CD8-positive, alpha-beta memory T cell (primary cell): ENCODE measurements at regions of chr2 and their contacts with region 1.

Region 1: DNA sequence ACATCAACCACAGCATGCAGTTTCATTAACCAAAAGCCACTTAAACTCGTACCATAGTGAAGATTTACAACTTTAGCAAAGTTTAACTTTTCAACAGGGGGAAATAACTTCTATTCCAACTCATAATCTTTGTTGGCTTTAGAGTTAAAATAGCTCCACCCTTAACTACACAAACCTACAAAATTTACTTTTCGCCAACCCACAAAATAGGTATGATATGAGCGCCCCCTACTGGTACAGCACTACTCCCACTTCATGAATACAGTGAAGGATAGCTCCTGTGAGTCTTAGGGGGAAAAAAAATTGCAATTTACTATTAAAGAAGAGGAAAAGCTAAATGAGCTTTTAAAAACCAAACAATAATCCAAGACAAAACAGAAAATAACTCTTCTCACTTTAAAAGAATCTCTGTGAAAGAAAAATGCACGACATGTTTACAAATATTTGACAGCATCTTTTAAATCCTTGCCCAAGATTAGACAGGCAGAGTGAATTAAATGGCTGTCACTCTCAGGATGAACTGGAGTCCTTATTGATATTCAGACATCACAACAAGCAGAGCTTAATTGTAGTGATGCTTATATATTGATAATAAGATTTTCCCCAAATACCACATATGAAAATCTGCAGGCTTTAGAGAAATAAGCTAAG is 32.2 kb downstream of the TMEFF2 start:
- DNase-seq: peak; percentile 45 to 63 (median 49)
- H3K4me3 ChIP-seq: peak overlapping the region; percentile 16
- H3K4me3 Mint-ChIP-seq: no peak overlapping the region
- H3K27ac ChIP-seq: no peak overlapping the region
- H3K27ac Mint-ChIP-seq: no peak overlapping the region
- H3K4me1 ChIP-seq: peaks cover 10% of the 10 kb centered on the region
- H3K4me1 Mint-ChIP-seq: peaks cover 7 to 8% (median 8%) of the 10 kb centered on the region in 3 donors
- H3K27me3 ChIP-seq: no peaks in the 10 kb centered on the region
- H3K27me3 Mint-ChIP-seq: peaks cover 3 to 32% of the 10 kb centered on the region in 2 donors

Region 2: GRCh38 chr2:191539068-191539467 is 623.4 kb before region 1 on chr2:
- CTCF ChIA-PET with region 1: interaction called, 13 read pairs
- POLR2A ChIA-PET with region 1: no interaction called
- DNase-seq: no peak
- H3K4me3 ChIP-seq: no peak overlapping the region
- H3K4me3 Mint-ChIP-seq: no peak overlapping the region
- H3K27ac ChIP-seq: no peak overlapping the region
- H3K27ac Mint-ChIP-seq: no peak overlapping the region
- H3K4me1 ChIP-seq: no peaks in the 10 kb centered on the region
- H3K4me1 Mint-ChIP-seq: no peaks in the 10 kb centered on the region
- H3K27me3 ChIP-seq: no peaks in the 10 kb centered on the region
- H3K27me3 Mint-ChIP-seq: peaks cover 6 to 16% of the 10 kb centered on the region in 2 donors

Region 3: DNA sequence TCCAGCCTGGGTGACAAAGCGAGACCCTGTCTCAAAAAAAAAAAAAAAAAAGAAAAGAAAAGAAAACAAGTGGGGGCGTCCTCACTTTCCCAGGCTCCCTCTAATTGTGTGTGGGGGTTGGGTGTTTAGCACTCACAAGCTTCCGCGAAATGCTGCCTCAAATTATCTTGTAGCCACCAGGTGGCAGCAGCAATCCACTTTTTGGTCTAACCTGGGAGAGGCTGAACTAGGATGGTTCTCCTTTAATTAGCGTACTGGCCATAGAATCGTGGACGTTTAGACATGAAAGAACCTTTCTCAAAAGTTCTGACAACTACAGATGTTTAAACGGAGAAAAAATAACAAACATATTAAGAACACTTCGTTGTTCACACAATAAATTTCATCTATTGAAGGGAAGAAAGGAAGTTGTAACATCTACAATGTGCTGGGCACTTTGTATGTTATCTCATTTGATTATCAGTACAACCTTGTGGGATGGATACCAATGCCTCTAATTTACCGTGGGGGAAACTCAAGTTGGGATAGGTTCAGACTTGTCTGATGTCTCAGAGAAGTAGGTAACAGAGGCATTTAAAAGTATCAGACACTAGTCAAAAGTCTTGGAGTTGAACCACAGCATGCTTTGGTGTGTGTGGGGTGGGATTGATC is 607.3 kb before region 1 on chr2:
- CTCF ChIA-PET with region 1: interaction called, 77 read pairs
- POLR2A ChIA-PET with region 1: no interaction called
- DNase-seq: peak; percentile 62 to 84 (median 68)
- H3K4me3 ChIP-seq: no peak overlapping the region
- H3K4me3 Mint-ChIP-seq: no peak overlapping the region
- H3K27ac ChIP-seq: no peak overlapping the region
- H3K27ac Mint-ChIP-seq: no peak overlapping the region
- H3K4me1 ChIP-seq: peaks cover 3% of the 10 kb centered on the region
- H3K4me1 Mint-ChIP-seq: peaks cover 3 to 4% (median 3%) of the 10 kb centered on the region in 3 donors
- H3K27me3 ChIP-seq: no peaks in the 10 kb centered on the region
- H3K27me3 Mint-ChIP-seq: peaks cover 7 to 37% of the 10 kb centered on the region in 2 donors

Region 4: DNA sequence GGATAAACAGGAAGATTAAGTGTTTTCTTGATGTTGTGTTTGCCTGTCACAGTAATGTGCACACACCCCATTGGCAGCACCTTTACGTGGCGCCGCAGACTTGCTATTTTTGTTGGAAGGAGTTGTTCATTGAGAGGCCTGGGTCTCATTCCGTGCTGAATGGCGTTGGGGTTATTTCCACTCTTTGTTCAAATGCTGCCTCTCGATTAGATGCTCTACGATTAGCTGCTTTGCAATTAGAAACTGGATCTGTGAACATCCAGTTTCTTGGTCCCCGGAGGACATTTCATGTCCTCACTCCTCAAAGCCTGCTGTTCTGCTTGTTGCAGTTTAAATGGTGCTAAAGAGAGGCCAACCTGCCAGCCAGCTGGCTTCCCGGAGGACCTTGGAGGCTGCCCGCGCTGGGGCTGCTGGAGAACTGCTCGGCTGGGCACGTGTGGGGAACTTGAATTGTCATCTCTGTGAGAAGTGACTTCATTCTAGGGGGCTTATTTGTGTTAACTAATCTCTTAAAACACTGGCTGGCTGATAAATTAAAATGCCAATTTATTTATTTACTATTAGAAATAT is 602.0 kb before region 1 on chr2:
- CTCF ChIA-PET with region 1: interaction called, 77 read pairs
- POLR2A ChIA-PET with region 1: no interaction called
- DNase-seq: no peak
- H3K4me3 ChIP-seq: no peak overlapping the region
- H3K4me3 Mint-ChIP-seq: no peak overlapping the region
- H3K27ac ChIP-seq: no peak overlapping the region
- H3K27ac Mint-ChIP-seq: peak overlapping the region in 1 of 8 donors; percentile 31
- H3K4me1 ChIP-seq: no peaks in the 10 kb centered on the region
- H3K4me1 Mint-ChIP-seq: peaks cover 0 to 3% (median 3%) of the 10 kb centered on the region in 3 donors
- H3K27me3 ChIP-seq: no peaks in the 10 kb centered on the region
- H3K27me3 Mint-ChIP-seq: peaks cover 13 to 36% of the 10 kb centered on the region in 2 donors

Region 5: GRCh38 chr2:191566344-191566743 is 596.2 kb before region 1 on chr2:
- CTCF ChIA-PET with region 1: interaction called, 15 read pairs
- POLR2A ChIA-PET with region 1: no interaction called
- DNase-seq: peak; percentile 49 to 69 (median 56)
- H3K4me3 ChIP-seq: no peak overlapping the region
- H3K4me3 Mint-ChIP-seq: no peak overlapping the region
- H3K27ac ChIP-seq: no peak overlapping the region
- H3K27ac Mint-ChIP-seq: no peak overlapping the region
- H3K4me1 ChIP-seq: peaks cover 16% of the 10 kb centered on the region
- H3K4me1 Mint-ChIP-seq: peaks cover 26 to 28% (median 27%) of the 10 kb centered on the region in 3 donors
- H3K27me3 ChIP-seq: peaks cover 4% of the 10 kb centered on the region
- H3K27me3 Mint-ChIP-seq: peaks cover 21 to 65% of the 10 kb centered on the region in 2 donors

Region 6: DNA sequence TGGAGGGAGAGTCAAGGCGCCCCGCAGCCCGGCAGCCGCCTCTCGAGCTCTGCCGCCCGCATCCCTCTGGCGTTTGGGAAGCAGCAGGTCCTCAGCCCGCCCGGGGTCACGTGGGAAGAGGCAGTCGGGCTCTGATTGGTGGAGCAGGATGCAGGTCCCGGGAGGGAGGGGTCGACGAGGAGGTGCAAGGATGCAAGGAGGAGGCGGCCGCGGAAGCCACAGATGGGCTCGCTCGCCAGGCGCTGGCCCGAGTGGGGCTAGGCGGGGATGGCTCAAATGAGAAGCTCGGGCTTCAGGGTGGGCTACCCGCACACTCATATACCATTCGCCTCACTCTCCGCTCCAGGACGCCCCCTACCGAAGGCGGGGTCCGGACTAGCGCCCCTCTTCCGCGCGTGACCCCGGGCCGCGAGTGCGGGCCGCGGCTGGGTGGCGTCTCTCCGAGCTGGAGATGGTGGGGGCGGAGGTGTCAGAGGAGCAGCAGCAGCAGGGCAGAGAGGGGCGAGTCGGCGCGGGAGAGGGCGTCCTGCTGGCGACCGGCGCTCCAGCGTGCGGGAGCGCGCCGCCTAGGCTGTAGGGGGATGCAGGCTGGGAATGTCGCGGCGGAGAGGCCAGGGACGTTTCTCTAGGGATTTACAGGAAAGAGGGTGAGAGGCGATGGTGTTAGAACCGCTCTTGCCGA is 32.5 kb after region 1 on chr2 and contains the start of gene TMEFF2:
- CTCF ChIA-PET with region 1: interaction called, 11 read pairs
- POLR2A ChIA-PET with region 1: no interaction called
- DNase-seq: peak in 3 of 5 donors; percentile 2 to 51 (median 13)
- H3K4me3 ChIP-seq: peak within 1 kb of the TSS; percentile 51
- H3K4me3 Mint-ChIP-seq: peak within 1 kb of the TSS; percentile 58 to 85 (median 76)
- H3K27ac ChIP-seq: no peak within 1 kb of the TSS
- H3K27ac Mint-ChIP-seq: peak within 1 kb of the TSS in 2 of 8 donors; percentile 39 to 47
- H3K4me1 ChIP-seq: peaks cover 18% of the 10 kb centered on the region
- H3K4me1 Mint-ChIP-seq: peaks cover 24 to 34% (median 33%) of the 10 kb centered on the region in 3 donors
- H3K27me3 ChIP-seq: peaks cover 34% of the 10 kb centered on the region
- H3K27me3 Mint-ChIP-seq: peaks cover 40 to 83% of the 10 kb centered on the region in 2 donors
- total RNA-seq, gene TMEFF2: not detected